ENCODE measurements at regions of chr5 and their contacts with region 1.

Region 1: GRCh38 chr5:96934708-96935558 is 947 bp upstream of the LNPEP start:
- DNase-seq: peak; percentile 85 to 98 (median 95)
- ATAC-seq: peak; percentile 69 to 72
- H3K4me3 Mint-ChIP-seq: peak overlapping the region; percentile 89 to 98 (median 94)
- H3K27ac Mint-ChIP-seq: peak overlapping the region; percentile 95 to 99 (median 96)
- H3K4me1 Mint-ChIP-seq: peaks cover 43 to 71% (median 61%) of the 10 kb centered on the region in 4 donors
- H3K27me3 Mint-ChIP-seq: no peaks in the 10 kb centered on the region

Region 2: GRCh38 chr5:96844476-96844990 is 90.4 kb before region 1 on chr5:
- POLR2A ChIA-PET with region 1: no interaction called
- DNase-seq: no peak
- ATAC-seq: no peak
- H3K4me3 Mint-ChIP-seq: no peak overlapping the region
- H3K27ac Mint-ChIP-seq: no peak overlapping the region
- H3K4me1 Mint-ChIP-seq: peaks cover 0 to 16% (median 4%) of the 10 kb centered on the region in 4 donors
- H3K27me3 Mint-ChIP-seq: no peaks in the 10 kb centered on the region

Region 3: GRCh38 chr5:96868603-96869371 is 66.1 kb before region 1 on chr5:
- POLR2A ChIA-PET with region 1: interaction called, 11 read pairs
- DNase-seq: peak in 6 of 10 donors; percentile 25 to 71 (median 52)
- ATAC-seq: peak; percentile 97 to 98
- H3K4me3 Mint-ChIP-seq: peak overlapping the region in 1 of 10 donors; percentile 11
- H3K27ac Mint-ChIP-seq: peak overlapping the region in 2 of 10 donors; percentile 20 to 84
- H3K4me1 Mint-ChIP-seq: peaks cover 16 to 47% (median 39%) of the 10 kb centered on the region in 4 donors
- H3K27me3 Mint-ChIP-seq: peaks cover 0 to 3% (median 0%) of the 10 kb centered on the region in 5 donors

Region 4: DNA sequence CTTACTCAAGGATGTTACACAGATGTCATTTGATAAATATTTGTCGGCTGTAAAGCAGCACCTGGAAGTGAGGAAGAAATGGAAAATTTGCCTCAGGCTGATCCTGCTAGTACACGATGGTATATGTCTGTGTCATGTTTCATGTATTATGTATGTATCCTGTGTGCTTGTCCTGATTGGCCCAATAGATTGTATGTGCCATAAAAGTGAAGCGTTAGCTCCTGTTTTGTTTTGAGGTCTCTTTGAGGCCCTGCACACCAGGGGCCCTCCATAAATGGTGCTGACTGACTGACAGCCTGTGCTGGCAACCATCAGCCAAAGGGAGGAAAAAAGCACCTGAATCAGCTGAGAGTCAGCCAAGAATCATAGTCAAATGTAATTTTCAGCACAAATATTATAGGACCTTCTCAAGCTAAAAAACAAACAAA is 10.9 kb before region 1 on chr5:
- POLR2A ChIA-PET with region 1: interaction called, 50 read pairs
- DNase-seq: peak in 8 of 10 donors; percentile 13 to 71 (median 50)
- ATAC-seq: peak; percentile 97
- H3K4me3 Mint-ChIP-seq: peak overlapping the region; percentile 9 to 74 (median 58)
- H3K27ac Mint-ChIP-seq: peak overlapping the region; percentile 84 to 98 (median 94)
- H3K4me1 Mint-ChIP-seq: peaks cover 18 to 77% (median 54%) of the 10 kb centered on the region in 4 donors
- H3K27me3 Mint-ChIP-seq: no peaks in the 10 kb centered on the region

Region 5: GRCh38 chr5:96984506-96985192 is 49.7 kb after region 1 on chr5:
- POLR2A ChIA-PET with region 1: interaction called, 12 read pairs
- DNase-seq: no peak
- ATAC-seq: no peak
- H3K4me3 Mint-ChIP-seq: no peak overlapping the region
- H3K27ac Mint-ChIP-seq: peak overlapping the region in 5 of 10 donors; percentile 1 to 56 (median 15)
- H3K4me1 Mint-ChIP-seq: peaks cover 25 to 69% (median 58%) of the 10 kb centered on the region in 4 donors
- H3K27me3 Mint-ChIP-seq: no peaks in the 10 kb centered on the region

Region 6: GRCh38 chr5:97449172-97449571 is 514.2 kb after region 1 on chr5:
- POLR2A ChIA-PET with region 1: no interaction called
- DNase-seq: no peak
- ATAC-seq: no peak
- H3K4me3 Mint-ChIP-seq: no peak overlapping the region
- H3K27ac Mint-ChIP-seq: no peak overlapping the region
- H3K4me1 Mint-ChIP-seq: no peaks in the 10 kb centered on the region
- H3K27me3 Mint-ChIP-seq: peaks cover 0 to 1% (median 0%) of the 10 kb centered on the region in 5 donors

Measured in naive thymus-derived CD8-positive, alpha-beta T cell (primary cell).